Activated CD4-positive, alpha-beta T cell treated with anti-CD3 and anti-CD28 coated beads, Interleukin-2, amount 10 ng/mL, durations not matched to agents 24 days and 14 days (primary cell): ENCODE measurements at regions of chr6 and their contacts with region 1.

Region 1: DNA sequence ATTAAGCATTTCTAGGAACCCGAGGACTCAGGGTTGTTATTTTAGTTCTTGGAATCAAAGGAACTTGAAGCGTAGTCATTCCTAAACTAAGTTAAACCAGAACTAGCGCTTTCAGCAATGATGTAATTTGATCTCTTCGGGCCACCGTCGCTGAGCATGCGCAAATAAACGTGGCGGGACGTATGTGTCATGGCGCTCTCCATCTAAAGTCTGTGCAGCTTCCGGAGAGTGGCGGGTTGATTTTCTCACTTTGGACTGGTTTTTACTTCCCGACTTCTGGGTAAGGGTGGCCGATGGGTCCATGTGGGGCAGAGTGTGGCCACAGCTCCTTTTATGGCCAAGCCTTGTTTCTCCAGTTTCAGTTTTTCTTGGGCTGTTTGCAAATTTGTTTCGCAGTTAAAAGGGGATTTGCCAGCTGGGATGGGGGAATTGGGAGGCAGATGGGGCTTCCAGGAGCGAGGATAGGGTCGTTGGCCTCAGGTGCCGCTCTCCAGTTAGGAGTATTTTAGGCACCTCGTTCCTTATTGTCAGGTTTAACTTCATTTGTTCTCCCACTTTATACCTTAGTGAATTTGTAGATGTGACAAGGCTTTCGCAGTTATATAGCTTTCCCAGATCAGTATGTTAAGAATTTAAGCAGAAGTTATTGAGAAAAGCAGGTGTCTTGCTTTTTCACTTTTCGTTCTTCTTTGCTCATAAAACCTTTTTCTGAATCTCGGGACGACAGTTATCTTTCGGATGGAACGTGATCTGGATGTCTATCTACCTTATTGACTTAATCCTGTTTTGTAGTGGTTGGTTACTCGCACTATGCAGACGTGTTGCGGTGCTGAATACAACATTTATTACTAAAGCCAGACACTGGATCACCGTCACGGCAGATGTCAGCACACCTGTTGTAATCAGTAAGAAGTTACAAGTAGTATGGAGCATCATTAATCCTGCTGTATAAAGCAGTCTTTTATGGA is at the start of gene CDKAL1:
- DNase-seq: peak; percentile 97
- H3K4me3 Mint-ChIP-seq: peak within 1 kb of the TSS; percentile 96
- H3K27ac Mint-ChIP-seq: peak within 1 kb of the TSS; percentile 95
- H3K4me1 Mint-ChIP-seq: peaks cover 37% of the 10 kb centered on the region
- H3K27me3 Mint-ChIP-seq: peaks cover 2% of the 10 kb centered on the region
- total RNA-seq, gene CDKAL1: 28.5 and 29.1 TPM in 2 replicates

Region 2: GRCh38 chr6:20183030-20183437 is 351.5 kb before region 1 on chr6:
- intact Hi-C with region 1: no loop called
- DNase-seq: no peak
- H3K4me3 Mint-ChIP-seq: no peak overlapping the region
- H3K27ac Mint-ChIP-seq: no peak overlapping the region
- H3K4me1 Mint-ChIP-seq: peaks cover 13% of the 10 kb centered on the region
- H3K27me3 Mint-ChIP-seq: no peaks in the 10 kb centered on the region

Region 3: GRCh38 chr6:20202324-20202658 is 332.3 kb before region 1 on chr6:
- intact Hi-C with region 1: loop called (anchors 2 kb)
- DNase-seq: no peak
- H3K4me3 Mint-ChIP-seq: no peak overlapping the region
- H3K27ac Mint-ChIP-seq: peak overlapping the region; percentile 21
- H3K4me1 Mint-ChIP-seq: peaks cover 57% of the 10 kb centered on the region
- H3K27me3 Mint-ChIP-seq: no peaks in the 10 kb centered on the region

Region 4: GRCh38 chr6:20291764-20292580 is 242.6 kb before region 1 on chr6:
- intact Hi-C with region 1: loop called (anchors 1 kb)
- DNase-seq: peak; percentile 93
- H3K4me3 Mint-ChIP-seq: peak overlapping the region; percentile 9
- H3K27ac Mint-ChIP-seq: peak overlapping the region; percentile 2
- H3K4me1 Mint-ChIP-seq: peaks cover 35% of the 10 kb centered on the region
- H3K27me3 Mint-ChIP-seq: peaks cover 7% of the 10 kb centered on the region